HCT116 (cell line): ENCODE measurements at regions of chr14 and their contacts with region 1.

Region 1: GRCh38 chr14:95993768-95994592 is 45.2 kb upstream of the C14orf132 start:
- DNase-seq: peak; percentile 43
- ATAC-seq: peak; percentile 71
- H3K4me3 ChIP-seq: no peak overlapping the region
- H3K27ac ChIP-seq: no peak overlapping the region
- H3K4me1 ChIP-seq: no peaks in the 10 kb centered on the region
- H3K27me3 ChIP-seq: peaks cover 16% of the 10 kb centered on the region
- CTCF ChIP-seq: peak; percentile 64 to 91 (median 83)
- POLR2A ChIP-seq: no peak
- RAD21 ChIP-seq: peak; percentile 87

Region 2: DNA sequence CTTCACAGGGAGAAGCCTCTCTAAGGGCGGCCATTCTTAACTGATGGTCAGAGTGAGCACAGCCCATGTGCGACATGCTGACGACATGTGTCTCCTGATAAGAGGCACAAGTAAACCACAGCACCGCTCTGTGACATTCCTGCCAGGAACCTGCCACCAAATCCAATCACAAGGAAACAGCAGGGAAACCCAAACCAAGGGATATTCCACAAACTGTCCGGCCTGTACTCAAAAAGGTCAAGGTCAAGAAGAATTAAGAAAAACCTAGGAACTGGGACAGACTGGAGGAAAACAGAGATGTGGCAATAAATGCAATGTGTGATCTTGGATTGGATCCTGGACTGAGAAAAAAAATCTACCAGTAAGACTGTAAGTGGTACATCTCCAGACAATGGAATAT is 569.5 kb before region 1 on chr14:
- CTCF ChIA-PET with region 1: no interaction called
- POLR2A ChIA-PET with region 1: no interaction called
- RAD21 ChIA-PET with region 1: no interaction called
- intact Hi-C with region 1: loop called (anchors 5 kb)
- DNase-seq: no peak
- ATAC-seq: no peak
- H3K4me3 ChIP-seq: no peak overlapping the region
- H3K27ac ChIP-seq: no peak overlapping the region
- H3K4me1 ChIP-seq: peaks cover 0 to 11% of the 10 kb centered on the region in 2 experiments; a peak in 2 of 4 replicates
- H3K27me3 ChIP-seq: no peaks in the 10 kb centered on the region
- CTCF ChIP-seq: no peak
- POLR2A ChIP-seq: no peak
- RAD21 ChIP-seq: no peak

Region 3: GRCh38 chr14:95561001-95561412 is 433.0 kb before region 1 on chr14:
- CTCF ChIA-PET with region 1: interaction called, 26 read pairs
- POLR2A ChIA-PET with region 1: no interaction called
- RAD21 ChIA-PET with region 1: interaction called in 1 of 2 experiments, 3 read pairs
- intact Hi-C with region 1: loop called (anchors 1 kb)
- DNase-seq: peak; percentile 84
- ATAC-seq: peak; percentile 100
- H3K4me3 ChIP-seq: no peak overlapping the region
- H3K27ac ChIP-seq: no peak overlapping the region
- H3K4me1 ChIP-seq: no peaks in the 10 kb centered on the region
- H3K27me3 ChIP-seq: no peaks in the 10 kb centered on the region
- CTCF ChIP-seq: peak; percentile 97 to 99 (median 99)
- POLR2A ChIP-seq: no peak
- RAD21 ChIP-seq: peak; percentile 99

Region 4: DNA sequence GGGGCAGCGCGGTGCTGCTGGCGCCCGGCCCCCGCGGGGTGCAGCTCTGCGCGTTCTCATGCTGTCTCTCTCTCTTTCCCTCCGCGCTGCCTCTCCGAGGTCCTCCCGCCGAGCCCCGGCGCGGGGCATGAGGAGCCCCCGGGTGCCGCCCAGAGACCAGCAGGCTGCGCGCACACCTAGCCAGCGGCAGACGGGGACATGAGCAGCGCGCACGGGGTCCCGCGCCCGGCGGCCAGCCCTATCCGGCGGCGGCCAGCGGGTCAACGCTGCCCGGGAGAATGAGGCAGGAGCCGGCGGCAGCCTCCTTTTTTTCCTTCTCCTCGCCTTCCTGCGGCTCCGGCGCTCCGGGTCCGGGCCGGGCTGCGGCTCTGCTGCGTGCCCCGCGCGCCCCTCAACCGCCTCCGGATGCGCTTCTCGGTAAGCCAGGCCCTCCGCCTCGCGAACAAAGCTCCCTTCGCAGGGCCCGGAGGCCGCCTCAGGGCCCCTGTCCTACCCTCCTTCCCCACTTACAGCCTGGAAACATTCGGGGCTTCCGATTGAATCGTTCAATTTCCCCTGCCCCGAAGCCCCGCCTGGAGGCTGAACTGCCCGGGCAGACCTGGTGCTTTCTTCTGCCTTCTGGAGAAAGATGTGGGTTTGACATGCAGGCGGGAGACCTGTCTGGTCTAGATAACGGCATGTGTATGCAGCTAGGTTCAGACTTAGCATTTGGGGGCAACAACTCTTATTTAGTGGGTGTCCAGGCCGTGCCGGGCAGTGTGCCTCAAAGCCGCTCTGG is 117.0 kb before region 1 on chr14 and contains the start of gene TUNAR:
- CTCF ChIA-PET with region 1: no interaction called
- POLR2A ChIA-PET with region 1: no interaction called
- RAD21 ChIA-PET with region 1: no interaction called
- intact Hi-C with region 1: no loop called
- DNase-seq: no peak
- ATAC-seq: no peak
- H3K4me3 ChIP-seq: no peak within 1 kb of the TSS
- H3K27ac ChIP-seq: no peak within 1 kb of the TSS
- H3K4me1 ChIP-seq: no peaks in the 10 kb centered on the region
- H3K27me3 ChIP-seq: peaks cover 56% of the 10 kb centered on the region
- CTCF ChIP-seq: no peak
- POLR2A ChIP-seq: no peak
- RAD21 ChIP-seq: no peak
- total RNA-seq, gene TUNAR: not detected

Region 5: GRCh38 chr14:95895720-95896119 is 98.3 kb before region 1 on chr14:
- CTCF ChIA-PET with region 1: interaction called, 4 read pairs
- POLR2A ChIA-PET with region 1: no interaction called
- RAD21 ChIA-PET with region 1: no interaction called
- intact Hi-C with region 1: loop called (anchors 2 kb)
- DNase-seq: peak; percentile 26
- ATAC-seq: peak; percentile 93
- H3K4me3 ChIP-seq: no peak overlapping the region
- H3K27ac ChIP-seq: no peak overlapping the region
- H3K4me1 ChIP-seq: 0 out of 4 replicates have a peak, but pooled peaks cover 0 to 7% of the 10 kb centered on the region in 2 experiments
- H3K27me3 ChIP-seq: peaks cover 82% of the 10 kb centered on the region
- CTCF ChIP-seq: peak; percentile 20 to 70 (median 62); a peak in 5 of 6 replicates
- POLR2A ChIP-seq: no peak
- RAD21 ChIP-seq: peak; percentile 42

Region 6: DNA sequence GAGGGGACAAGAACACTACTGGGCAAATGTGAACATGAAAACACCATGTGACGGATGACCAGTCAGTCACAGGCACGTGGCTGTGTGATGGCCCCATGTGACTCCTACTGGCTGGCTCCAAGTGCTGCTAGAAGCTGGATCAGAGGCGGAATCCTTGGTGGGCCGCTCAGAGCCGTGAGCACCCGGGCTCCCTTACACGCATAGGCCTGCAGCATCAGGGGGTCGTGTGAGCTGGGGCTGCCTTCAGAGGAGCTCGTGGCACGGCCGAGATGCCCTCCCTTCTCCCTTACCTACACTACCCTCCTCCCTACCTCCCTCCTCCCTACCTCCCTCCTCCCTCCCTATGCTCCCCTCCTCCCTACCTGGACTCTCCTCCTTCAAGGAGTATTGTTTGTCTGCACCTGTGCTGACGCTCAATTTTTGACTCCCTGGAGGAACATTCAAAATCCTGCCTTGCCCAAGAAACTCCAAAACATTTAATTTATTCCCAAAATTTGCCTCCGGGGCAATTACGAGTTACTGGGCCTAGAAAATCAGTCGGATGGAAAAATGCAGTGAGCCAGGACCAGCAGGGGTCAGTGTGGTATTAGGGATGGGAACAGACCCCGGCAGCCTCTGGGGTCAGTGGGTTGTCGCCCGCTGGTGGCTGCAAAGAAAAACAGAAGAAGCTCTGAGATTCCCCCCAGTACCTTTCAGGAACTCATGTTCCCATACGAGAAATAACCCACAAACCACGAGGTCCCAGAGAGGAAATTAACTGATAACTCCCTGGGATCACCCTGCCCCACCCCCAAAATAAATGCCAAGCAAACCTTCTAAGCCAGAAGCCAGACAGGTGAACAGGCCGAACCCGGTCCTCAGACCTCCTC is 106.4 kb after region 1 on chr14:
- CTCF ChIA-PET with region 1: interaction called, 81 read pairs
- POLR2A ChIA-PET with region 1: no interaction called
- RAD21 ChIA-PET with region 1: interaction called, 7 to 11 read pairs
- intact Hi-C with region 1: loop called (anchors 1 kb)
- DNase-seq: peak; percentile 73
- ATAC-seq: peak; percentile 79
- H3K4me3 ChIP-seq: no peak overlapping the region
- H3K27ac ChIP-seq: no peak overlapping the region
- H3K4me1 ChIP-seq: peaks cover 4 to 9% of the 10 kb centered on the region in 2 experiments; a peak in 1 of 4 replicates
- H3K27me3 ChIP-seq: no peaks in the 10 kb centered on the region
- CTCF ChIP-seq: peak; percentile 91 to 99 (median 98)
- POLR2A ChIP-seq: no peak
- RAD21 ChIP-seq: peak; percentile 99